ENCODE measurements at regions of chr19 and their contacts with region 1.

Region 1: GRCh38 chr19:20237761-20238623 is 71.0 kb downstream of the ZNF486 start:
- DNase-seq: peak; percentile 82 to 86
- H3K4me3 ChIP-seq: peak overlapping the region; percentile 88
- H3K27ac ChIP-seq: no peak overlapping the region
- H3K4me1 ChIP-seq: no peaks in the 10 kb centered on the region
- H3K27me3 ChIP-seq: no peaks in the 10 kb centered on the region
- CTCF ChIP-seq: no peak

Region 2: GRCh38 chr19:21564406-21564805 is 1326.4 kb after region 1 on chr19:
- CTCF ChIA-PET with region 1: no interaction called
- POLR2A ChIA-PET with region 1: interaction called, 11 read pairs
- intact Hi-C with region 1: no loop called
- DNase-seq: no peak
- H3K4me3 ChIP-seq: no peak overlapping the region
- H3K27ac ChIP-seq: no peak overlapping the region
- H3K4me1 ChIP-seq: no peaks in the 10 kb centered on the region
- H3K27me3 ChIP-seq: no peaks in the 10 kb centered on the region
- CTCF ChIP-seq: no peak